A673 (cell line): ENCODE measurements at regions of chr12 and their contacts with region 1.

Region 1: DNA sequence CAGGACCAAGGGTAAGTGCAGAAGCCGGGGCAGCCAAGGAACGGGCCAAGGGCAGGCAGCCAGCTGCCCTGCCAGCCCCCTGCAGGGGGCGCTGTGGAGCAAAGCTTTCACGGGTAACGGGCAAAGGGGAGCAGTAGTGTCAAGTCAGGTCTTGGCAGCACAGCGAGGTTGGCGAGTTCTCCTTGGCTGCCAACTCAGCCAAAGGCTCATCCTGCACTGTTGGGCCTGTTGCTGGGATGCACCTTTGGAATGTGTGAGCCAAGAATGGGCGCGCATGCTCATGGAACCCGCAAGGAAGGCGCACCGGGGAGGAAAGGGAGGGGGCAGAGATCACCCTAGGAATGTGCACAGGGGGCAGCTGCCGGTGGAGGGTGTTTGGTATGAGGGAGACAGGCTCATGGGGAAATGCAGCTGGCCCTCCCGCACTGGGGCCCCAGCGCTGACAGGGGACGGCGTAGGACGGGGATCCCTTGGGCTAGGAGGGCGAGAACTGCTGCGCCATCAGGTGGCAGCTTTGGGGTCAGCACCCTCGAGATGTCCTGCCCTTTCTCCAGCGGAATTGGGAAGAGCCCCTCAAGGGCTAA is 138.0 kb downstream of the ASCL4 start:
- DNase-seq: peak; percentile 60
- H3K4me3 ChIP-seq: peak overlapping the region; percentile 21
- H3K27ac ChIP-seq: no peak overlapping the region
- H3K4me1 ChIP-seq: no peaks in the 10 kb centered on the region
- H3K27me3 ChIP-seq: peaks cover 54% of the 10 kb centered on the region
- CTCF ChIP-seq: peak; percentile 92

Region 2: GRCh38 chr12:108468201-108468968 is 555.9 kb after region 1 on chr12:
- CTCF ChIA-PET with region 1: no interaction called
- POLR2A ChIA-PET with region 1: no interaction called
- intact Hi-C with region 1: loop called (anchors 10 kb)
- DNase-seq: peak; percentile 62
- H3K4me3 ChIP-seq: no peak overlapping the region
- H3K27ac ChIP-seq: no peak overlapping the region
- H3K4me1 ChIP-seq: no peaks in the 10 kb centered on the region
- H3K27me3 ChIP-seq: peaks cover 37% of the 10 kb centered on the region
- CTCF ChIP-seq: no peak